Activated T-helper 1 cell treated with anti-CD3 and anti-CD28 coated beads, Interleukin-12 subunit alpha, Interleukin-12 subunit beta, Interleukin-2, Interleukin-4 antibody, amounts not matched to agents 30 ng/mL and 10 ng/mL and 1 ng/mL, durations not matched to agents 14 hours and 24 hours and 36 hours (primary cell): ENCODE measurements at regions of chr4 and their contacts with region 1.

Region 1: DNA sequence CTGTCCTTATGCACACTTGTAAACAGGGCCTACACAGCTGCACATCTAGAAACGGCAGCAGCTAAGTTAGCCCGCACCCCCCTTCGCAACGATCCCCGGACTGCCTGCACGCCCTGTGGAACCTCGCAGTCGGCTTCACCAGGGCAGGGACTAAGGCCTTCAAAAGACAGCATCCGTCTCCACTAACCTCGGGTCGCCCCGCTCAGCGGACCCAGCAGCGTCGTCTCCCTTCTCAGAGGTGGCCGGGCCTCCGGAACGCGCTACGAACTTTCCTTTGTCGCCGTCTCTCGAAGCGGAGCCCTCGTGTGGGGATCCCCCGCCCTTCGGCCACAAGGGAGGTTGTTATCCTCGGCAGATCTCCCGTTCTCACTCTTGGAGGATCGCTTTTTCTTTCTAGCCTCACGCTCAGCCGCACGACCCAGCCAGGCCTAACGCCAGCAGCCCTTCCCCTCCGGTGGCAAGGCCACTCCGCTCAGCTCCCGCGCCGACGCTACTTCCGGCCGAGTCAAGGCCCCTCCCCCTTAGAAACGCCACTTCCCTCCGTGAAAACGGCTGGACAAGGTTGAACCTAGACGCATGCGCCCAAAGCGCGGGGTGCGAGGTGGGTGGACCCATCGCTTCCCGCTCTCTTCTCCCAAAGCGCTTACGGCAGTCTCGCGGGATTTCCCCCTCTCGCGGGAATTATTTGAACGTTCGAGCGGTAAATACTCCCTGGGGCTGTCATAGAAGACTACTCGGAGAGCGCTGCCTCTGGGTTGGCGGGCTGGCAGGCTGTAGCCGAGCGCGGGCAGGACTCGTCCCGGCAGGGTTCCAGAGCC is at the starts of genes DCAF16 and NCAPG:
- DNase-seq: peak; percentile 99
- H3K4me3 Mint-ChIP-seq: peak within 1 kb of the TSS; percentile 97
- H3K27ac Mint-ChIP-seq: peak within 1 kb of the TSS; percentile 95
- H3K4me1 Mint-ChIP-seq: peaks cover 76% of the 10 kb centered on the region
- H3K27me3 Mint-ChIP-seq: no peaks in the 10 kb centered on the region
- total RNA-seq, gene DCAF16: 44.0 and 48.5 TPM in 2 replicates
- total RNA-seq, gene NCAPG: 43.7 and 46.3 TPM in 2 replicates

Region 2: GRCh38 chr4:16225863-16226815 is 1584.3 kb before region 1 on chr4 and contains the start of gene TAPT1:
- intact Hi-C with region 1: loop called (anchors 10 kb)
- DNase-seq: peak; percentile 78
- H3K4me3 Mint-ChIP-seq: peak within 1 kb of the TSS; percentile 97
- H3K27ac Mint-ChIP-seq: peak within 1 kb of the TSS; percentile 96
- H3K4me1 Mint-ChIP-seq: peaks cover 60% of the 10 kb centered on the region
- H3K27me3 Mint-ChIP-seq: no peaks in the 10 kb centered on the region
- total RNA-seq, gene TAPT1: 26.0 and 31.8 TPM in 2 replicates

Region 3: DNA sequence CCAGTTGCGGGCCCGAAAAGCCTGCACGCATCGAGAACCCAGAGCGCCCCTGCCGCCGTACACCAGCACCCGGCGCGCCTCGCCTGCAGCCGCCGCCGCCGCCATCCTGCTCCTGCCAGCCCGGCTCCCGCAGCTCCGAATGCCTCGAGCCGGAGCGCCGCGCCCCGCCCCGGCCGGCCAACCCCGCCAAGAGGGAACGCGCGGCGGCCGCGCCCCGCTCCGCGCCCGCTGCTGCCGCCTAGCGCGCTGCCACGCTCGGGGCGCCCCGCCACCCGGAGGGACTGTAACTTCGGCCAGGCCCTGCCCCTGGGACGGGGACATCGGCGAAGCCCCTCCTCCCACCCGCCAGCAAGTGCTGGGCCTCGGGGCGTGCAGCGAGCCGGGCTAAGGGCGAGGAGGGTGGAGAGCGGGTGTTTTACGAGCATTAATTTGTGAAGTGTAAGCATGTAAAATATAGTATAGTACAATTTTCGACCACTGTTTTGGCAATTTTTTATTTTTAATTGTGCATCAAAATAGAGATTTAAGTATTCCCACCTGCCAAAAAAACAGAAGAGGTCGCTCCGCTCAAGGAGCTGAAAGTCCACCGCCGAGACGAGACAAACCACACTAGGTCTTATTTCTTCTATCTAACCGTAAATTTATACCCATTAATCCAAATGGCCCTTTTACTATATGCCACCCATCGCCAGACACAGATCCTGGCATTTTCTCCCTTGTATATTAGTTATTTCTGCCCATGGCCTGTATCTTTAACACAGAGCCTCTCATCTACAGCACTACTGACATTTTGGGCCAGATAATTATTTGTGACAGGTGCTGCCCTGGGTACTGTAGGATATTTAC is 298.3 kb before region 1 on chr4 and contains the start of gene QDPR:
- intact Hi-C with region 1: loop called (anchors 2 kb)
- DNase-seq: peak; percentile 69
- H3K4me3 Mint-ChIP-seq: peak within 1 kb of the TSS; percentile 98
- H3K27ac Mint-ChIP-seq: peak within 1 kb of the TSS; percentile 92
- H3K4me1 Mint-ChIP-seq: peaks cover 15% of the 10 kb centered on the region
- H3K27me3 Mint-ChIP-seq: peaks cover 19% of the 10 kb centered on the region
- total RNA-seq, gene QDPR: 28.7 and 29.7 TPM in 2 replicates

Region 4: DNA sequence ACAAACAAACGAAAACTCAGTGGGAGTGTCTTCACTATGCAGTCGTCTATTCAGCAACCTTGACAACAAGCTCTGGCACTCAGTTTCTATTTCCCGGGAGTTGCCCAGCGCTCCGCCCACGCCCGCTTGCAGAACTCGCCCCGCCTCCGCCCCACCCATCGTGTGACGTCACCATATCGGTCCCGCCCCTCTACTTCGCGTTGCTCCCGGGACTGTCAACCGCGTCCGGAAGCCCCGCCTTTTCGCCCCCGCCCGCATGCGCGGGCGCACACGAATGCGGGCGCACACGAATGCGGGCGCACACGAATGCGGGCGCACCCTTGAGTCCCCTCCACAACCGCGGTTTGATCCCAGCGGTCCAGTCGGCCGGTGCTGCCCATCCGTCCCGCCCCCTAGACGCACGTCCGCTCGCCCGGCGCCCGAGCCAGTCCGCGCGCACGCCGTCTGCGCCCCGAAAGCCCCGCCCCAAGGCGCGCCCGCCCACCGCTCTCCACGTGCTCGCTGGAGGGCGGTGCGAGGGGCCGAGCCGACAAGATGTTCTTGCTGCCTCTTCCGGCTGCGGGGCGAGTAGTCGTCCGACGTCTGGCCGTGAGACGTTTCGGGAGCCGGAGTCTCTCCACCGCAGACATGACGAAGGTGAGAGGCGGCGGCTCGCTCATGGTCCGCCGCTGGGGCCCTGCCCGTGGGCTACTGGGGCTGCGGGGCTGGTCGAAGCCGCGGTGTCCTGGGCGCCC is 233.4 kb before region 1 on chr4 and contains the start of gene LAP3:
- intact Hi-C with region 1: loop called (anchors 1 kb)
- DNase-seq: peak; percentile 98
- H3K4me3 Mint-ChIP-seq: peak within 1 kb of the TSS; percentile 93
- H3K27ac Mint-ChIP-seq: peak within 1 kb of the TSS; percentile 94
- H3K4me1 Mint-ChIP-seq: peaks cover 38% of the 10 kb centered on the region
- H3K27me3 Mint-ChIP-seq: no peaks in the 10 kb centered on the region
- total RNA-seq, gene LAP3: 108 and 109 TPM in 2 replicates

Region 5: DNA sequence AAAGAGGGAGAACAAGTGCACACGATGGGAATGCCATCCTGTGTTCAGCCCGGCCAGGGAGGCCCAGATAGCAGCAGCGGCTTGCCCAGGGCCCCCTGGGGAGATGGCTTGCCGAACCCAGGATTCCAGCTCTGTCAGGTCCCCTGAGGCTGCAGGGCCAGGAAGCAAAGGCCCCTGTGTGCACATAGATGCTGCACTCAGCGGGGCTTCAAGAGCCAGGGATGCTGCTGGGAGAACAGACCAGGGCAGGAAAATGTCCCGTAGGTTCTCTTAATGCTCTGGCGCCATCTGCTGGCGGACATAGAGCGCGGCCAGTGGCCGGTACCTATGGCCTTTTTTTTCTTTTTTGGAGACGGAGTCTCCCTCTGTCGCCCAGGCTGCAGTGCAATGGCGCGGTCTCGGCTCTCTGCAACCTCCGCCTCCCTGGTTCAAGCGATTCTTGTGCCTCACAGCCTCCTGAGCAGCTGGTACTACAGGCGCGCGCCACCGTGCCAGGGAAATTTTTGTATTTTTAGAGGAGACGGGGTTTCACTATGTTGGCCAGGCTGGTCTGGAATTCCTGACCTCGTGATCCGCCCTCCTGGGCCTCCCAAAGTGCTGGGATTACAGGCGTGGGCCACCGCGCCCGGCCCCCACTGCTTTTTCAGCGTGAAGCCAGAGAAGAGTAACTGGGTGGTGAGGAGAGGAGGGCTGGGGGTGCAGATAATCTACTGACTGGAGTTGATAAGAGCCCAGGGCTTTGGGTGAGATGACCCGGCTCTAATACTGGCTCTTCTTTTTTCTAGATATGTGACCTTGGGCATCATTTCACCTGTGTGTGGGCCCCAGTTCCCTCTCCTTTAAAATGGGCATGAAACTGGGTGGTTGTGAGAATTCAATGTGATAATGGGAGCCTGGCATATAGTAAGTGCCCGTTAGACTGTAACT is 173.5 kb before region 1 on chr4:
- intact Hi-C with region 1: loop called (anchors 2 kb)
- DNase-seq: peak; percentile 48
- H3K4me3 Mint-ChIP-seq: no peak overlapping the region
- H3K27ac Mint-ChIP-seq: no peak overlapping the region
- H3K4me1 Mint-ChIP-seq: no peaks in the 10 kb centered on the region
- H3K27me3 Mint-ChIP-seq: no peaks in the 10 kb centered on the region

Region 6: GRCh38 chr4:18021722-18022571 is 211.5 kb after region 1 on chr4 and contains the start of gene LCORL:
- intact Hi-C with region 1: loop called (anchors 1 kb)
- DNase-seq: peak; percentile 83
- H3K4me3 Mint-ChIP-seq: peak within 1 kb of the TSS; percentile 98
- H3K27ac Mint-ChIP-seq: peak within 1 kb of the TSS; percentile 93
- H3K4me1 Mint-ChIP-seq: peaks cover 26% of the 10 kb centered on the region
- H3K27me3 Mint-ChIP-seq: peaks cover 65% of the 10 kb centered on the region
- total RNA-seq, gene LCORL: 8.7 TPM in 2 replicates

Region 7: GRCh38 chr4:18234108-18234507 is 423.6 kb after region 1 on chr4:
- intact Hi-C with region 1: no loop called
- DNase-seq: no peak
- H3K4me3 Mint-ChIP-seq: no peak overlapping the region
- H3K27ac Mint-ChIP-seq: no peak overlapping the region
- H3K4me1 Mint-ChIP-seq: no peaks in the 10 kb centered on the region
- H3K27me3 Mint-ChIP-seq: no peaks in the 10 kb centered on the region

Region 8: DNA sequence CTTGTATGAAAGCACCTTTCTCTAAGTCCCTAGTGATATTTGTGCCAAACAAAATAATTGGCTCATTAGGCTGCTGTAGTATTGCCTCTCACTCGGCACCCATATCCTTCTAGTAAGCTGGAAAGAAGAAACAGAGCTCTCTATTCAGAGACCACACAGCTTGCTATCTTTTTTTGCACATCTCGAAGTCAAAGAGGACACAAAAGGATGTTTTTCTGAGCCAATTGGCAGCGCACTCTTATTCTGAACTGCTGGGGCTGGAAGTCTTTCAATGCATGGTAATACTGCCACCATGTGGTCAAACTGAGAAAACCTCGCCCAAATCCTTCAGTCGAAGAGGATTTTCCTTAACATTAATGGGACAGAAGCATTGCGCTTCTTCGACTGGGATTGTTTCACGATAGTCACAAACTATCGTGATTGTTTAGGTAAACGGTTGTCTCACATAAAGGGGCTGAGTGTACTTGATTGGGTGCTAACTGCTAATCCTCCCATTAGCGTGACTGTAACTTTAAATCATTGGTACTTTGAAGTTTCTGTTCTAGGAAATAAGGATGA is 783.1 kb after region 1 on chr4:
- intact Hi-C with region 1: loop called (anchors 2 kb)
- DNase-seq: peak; percentile 14
- H3K4me3 Mint-ChIP-seq: no peak overlapping the region
- H3K27ac Mint-ChIP-seq: no peak overlapping the region
- H3K4me1 Mint-ChIP-seq: peaks cover 8% of the 10 kb centered on the region
- H3K27me3 Mint-ChIP-seq: no peaks in the 10 kb centered on the region